Transverse colon (tissue), 4 donors: ENCODE measurements at regions of chr11 and their contacts with region 1.

Region 1: DNA sequence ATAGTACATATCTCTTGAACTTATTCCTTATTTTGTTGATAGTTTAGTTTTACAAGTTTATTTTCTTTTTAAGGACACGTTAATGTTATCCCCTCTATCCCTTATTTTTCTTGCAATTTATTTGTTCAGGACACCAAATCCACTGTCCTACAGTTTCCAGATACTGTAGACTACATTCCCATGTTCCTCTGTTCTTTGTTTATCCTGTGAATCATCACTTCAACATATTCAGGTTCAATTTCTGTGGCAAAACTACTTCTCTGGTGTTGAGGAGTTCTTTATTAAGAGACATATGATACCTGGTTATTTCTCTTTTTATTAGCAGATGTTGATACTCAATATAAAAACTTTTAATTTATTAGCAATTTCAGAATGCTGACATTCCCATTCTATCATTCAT is 72.8 kb upstream of the CLNS1A start:
- DNase-seq: no peak
- H3K4me3 ChIP-seq: no peak overlapping the region
- H3K27ac ChIP-seq: no peak overlapping the region
- H3K4me1 ChIP-seq: no peaks in the 10 kb centered on the region
- H3K27me3 ChIP-seq: no peaks in the 10 kb centered on the region
- CTCF ChIP-seq: no peak
- EP300 ChIP-seq: no peak
- POLR2A ChIP-seq: no peak

Region 2: GRCh38 chr11:77630157-77630710 is 80.1 kb before region 1 on chr11:
- in situ Hi-C with region 1: no loop called
- intact Hi-C with region 1: no loop called
- DNase-seq: no peak
- H3K4me3 ChIP-seq: no peak overlapping the region
- H3K27ac ChIP-seq: no peak overlapping the region
- H3K4me1 ChIP-seq: peaks cover 0 to 6% (median 0%) of the 10 kb centered on the region in 4 donors
- H3K27me3 ChIP-seq: no peaks in the 10 kb centered on the region
- CTCF ChIP-seq: no peak
- EP300 ChIP-seq: no peak
- POLR2A ChIP-seq: no peak

Region 3: DNA sequence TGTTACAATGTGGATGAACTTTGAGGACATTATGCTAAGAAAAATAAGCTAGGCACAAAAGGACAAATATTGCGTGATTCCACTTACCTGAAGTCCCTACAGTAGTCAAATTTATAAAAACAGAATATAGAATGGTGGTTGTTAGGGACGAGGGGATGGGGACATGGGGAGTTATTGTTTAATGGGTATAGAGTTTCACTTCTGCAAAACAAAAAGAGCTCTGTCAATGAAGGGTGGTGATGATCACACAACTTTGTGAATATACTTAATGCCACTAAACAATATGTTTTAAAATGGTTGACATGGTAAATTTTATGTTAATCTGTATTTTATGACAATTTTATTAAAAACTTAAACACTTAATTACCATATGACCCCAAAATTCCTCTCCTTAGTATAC is 258.0 kb after region 1 on chr11:
- in situ Hi-C with region 1: no loop called
- intact Hi-C with region 1: no loop called
- DNase-seq: no peak
- H3K4me3 ChIP-seq: no peak overlapping the region
- H3K27ac ChIP-seq: no peak overlapping the region
- H3K4me1 ChIP-seq: no peaks in the 10 kb centered on the region
- H3K27me3 ChIP-seq: no peaks in the 10 kb centered on the region
- CTCF ChIP-seq: no peak
- EP300 ChIP-seq: no peak
- POLR2A ChIP-seq: no peak

Region 4: GRCh38 chr11:78548911-78549590 is 838.7 kb after region 1 on chr11:
- in situ Hi-C with region 1: no loop called
- intact Hi-C with region 1: loop called (anchors 5 kb)
- DNase-seq: no peak
- H3K4me3 ChIP-seq: no peak overlapping the region
- H3K27ac ChIP-seq: no peak overlapping the region
- H3K4me1 ChIP-seq: peaks cover 0 to 19% (median 0%) of the 10 kb centered on the region in 4 donors
- H3K27me3 ChIP-seq: no peaks in the 10 kb centered on the region
- CTCF ChIP-seq: no peak
- EP300 ChIP-seq: no peak
- POLR2A ChIP-seq: no peak

Region 5: GRCh38 chr11:78659326-78660270 is 949.2 kb after region 1 on chr11:
- in situ Hi-C with region 1: no loop called
- intact Hi-C with region 1: no loop called
- DNase-seq: no peak
- H3K4me3 ChIP-seq: no peak overlapping the region
- H3K27ac ChIP-seq: no peak overlapping the region
- H3K4me1 ChIP-seq: no peaks in the 10 kb centered on the region
- H3K27me3 ChIP-seq: no peaks in the 10 kb centered on the region
- CTCF ChIP-seq: no peak
- EP300 ChIP-seq: no peak
- POLR2A ChIP-seq: no peak